Activated CD4-positive, alpha-beta T cell treated with anti-CD3 and anti-CD28 coated beads for 36 hours (primary cell): ENCODE measurements at regions of chr5 and their contacts with region 1.

Region 1: DNA sequence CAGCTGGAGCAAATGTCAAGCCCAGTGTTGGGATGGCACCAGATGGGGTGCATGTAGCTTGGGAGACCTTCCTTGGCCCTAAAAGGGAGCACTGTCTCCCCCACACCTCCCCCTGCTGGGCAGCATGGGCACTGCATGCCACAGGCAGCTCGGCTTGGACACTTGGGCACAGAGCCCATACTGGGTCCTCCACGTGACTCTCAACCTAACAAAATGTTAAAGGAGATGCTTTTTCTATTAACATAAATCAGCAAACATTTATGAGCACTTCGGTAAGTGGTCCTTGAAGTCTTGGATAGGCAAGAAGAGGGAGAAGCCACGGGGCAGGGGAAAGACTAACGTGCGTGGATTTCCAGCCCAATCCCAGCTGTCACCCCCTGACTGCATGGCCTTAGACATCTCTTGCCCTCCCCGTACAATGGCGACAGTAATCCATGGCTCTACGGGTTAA is 23.9 kb upstream of the MAPK9 start:
- DNase-seq: peak; percentile 84
- ATAC-seq: peak; percentile 66
- H3K4me3 Mint-ChIP-seq: no peak overlapping the region
- H3K27ac Mint-ChIP-seq: no peak overlapping the region
- H3K4me1 Mint-ChIP-seq: no peaks in the 10 kb centered on the region
- H3K27me3 Mint-ChIP-seq: peaks cover 4% of the 10 kb centered on the region

Region 2: GRCh38 chr5:180098961-180099732 is 216.6 kb before region 1 on chr5:
- CTCF ChIA-PET with region 1: no interaction called
- POLR2A ChIA-PET with region 1: no interaction called
- intact Hi-C with region 1: no loop called
- DNase-seq: no peak
- ATAC-seq: no peak
- H3K4me3 Mint-ChIP-seq: no peak overlapping the region
- H3K27ac Mint-ChIP-seq: no peak overlapping the region
- H3K4me1 Mint-ChIP-seq: no peaks in the 10 kb centered on the region
- H3K27me3 Mint-ChIP-seq: no peaks in the 10 kb centered on the region

Region 3: DNA sequence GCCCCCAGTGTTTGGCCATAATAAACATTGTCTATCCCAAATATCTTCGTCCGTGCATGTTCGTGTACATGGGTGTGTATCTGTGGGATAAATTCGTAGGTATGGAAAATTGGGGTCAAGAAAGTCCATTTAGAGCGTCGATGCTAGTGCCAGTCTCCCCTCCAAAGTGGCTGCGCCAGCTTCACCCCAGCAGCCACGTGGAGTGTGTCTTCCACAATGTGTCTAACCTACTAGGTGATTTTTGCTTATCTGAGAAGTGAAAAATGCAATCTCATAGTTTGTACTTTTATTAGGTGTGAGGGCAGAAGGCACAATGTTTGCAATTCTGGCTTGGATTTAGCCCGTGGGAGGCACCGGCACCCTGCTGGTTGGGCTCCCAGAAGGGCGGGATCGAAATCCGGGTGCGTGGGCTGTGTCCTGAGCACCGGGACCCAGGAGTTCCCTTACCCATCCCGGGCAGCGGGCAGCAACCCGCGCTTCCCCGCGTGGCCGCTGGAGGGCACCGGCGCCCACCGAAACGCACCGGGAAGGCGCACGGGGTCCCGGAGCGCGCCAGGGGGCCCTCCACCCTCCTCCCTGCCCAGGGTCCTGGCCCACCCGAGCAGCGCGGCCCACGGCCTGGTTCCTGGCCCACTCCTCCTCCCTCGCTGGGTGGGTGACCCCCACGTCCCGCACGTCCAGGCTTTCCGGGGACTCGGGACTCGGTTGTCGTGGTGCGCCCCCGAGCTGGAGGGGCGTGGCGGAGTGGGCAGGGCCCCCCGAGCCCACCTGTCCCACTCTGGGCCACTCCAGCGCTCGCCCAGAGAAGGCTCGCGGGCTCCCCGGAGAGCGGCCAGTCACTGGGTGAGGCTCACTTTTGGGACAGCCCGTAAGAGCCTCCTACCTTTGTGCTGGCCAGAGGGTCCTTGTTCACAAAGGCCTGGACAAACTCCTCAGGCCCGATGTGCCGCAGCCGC is 188.8 kb before region 1 on chr5:
- CTCF ChIA-PET with region 1: no interaction called
- POLR2A ChIA-PET with region 1: no interaction called
- intact Hi-C with region 1: loop called in 1 of 2 experiments (anchors 1 kb)
- DNase-seq: peak; percentile 66
- ATAC-seq: peak; percentile 85
- H3K4me3 Mint-ChIP-seq: no peak overlapping the region
- H3K27ac Mint-ChIP-seq: no peak overlapping the region
- H3K4me1 Mint-ChIP-seq: no peaks in the 10 kb centered on the region
- H3K27me3 Mint-ChIP-seq: peaks cover 14% of the 10 kb centered on the region

Region 4: DNA sequence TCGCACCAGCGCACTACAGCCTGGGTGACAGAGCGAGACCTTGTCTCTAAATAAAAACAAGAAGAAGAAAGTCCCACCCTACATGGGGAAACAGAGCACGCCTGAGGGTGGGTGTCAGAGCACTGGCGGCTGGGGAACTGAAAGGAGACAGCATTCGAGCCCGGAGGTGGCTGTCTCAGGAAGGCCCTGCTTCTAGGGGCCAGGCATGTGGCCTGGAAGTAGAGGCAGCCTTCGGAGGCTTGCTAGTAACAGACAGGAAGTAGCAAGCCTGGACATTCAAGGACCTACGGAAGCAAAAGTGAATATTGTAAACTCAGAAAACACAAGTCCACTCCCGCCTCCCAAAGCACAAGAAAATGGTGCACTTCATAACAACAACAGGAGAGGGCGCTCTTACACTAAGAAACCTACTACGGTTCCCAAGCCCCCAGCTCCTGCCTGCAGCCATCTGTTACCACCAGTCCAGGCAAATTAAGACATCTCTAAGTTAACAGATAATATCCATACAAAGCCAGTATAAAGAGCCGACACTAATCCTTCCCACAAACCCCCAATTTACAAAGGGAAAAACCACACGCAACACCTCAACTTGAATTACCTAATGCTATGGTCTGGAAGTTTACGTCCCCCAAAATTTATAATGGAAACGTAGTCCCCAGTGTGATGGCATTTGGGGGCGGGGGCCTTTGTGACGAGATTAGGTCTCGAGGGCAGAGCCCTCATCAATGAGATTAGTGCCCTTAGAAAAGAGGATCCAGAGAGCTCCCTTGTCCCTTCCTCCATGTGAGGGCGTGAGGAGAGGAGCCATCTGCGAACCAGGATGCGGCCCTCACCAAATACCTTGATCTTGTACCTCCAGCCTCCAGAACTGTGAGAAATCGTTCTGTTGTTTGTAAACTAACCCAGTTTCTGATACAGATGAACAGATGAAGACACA is 114.5 kb before region 1 on chr5:
- CTCF ChIA-PET with region 1: interaction called, 10 read pairs
- POLR2A ChIA-PET with region 1: no interaction called
- intact Hi-C with region 1: loop called in 1 of 2 experiments (anchors 1 kb)
- DNase-seq: peak; percentile 38
- ATAC-seq: no peak
- H3K4me3 Mint-ChIP-seq: no peak overlapping the region
- H3K27ac Mint-ChIP-seq: no peak overlapping the region
- H3K4me1 Mint-ChIP-seq: no peaks in the 10 kb centered on the region
- H3K27me3 Mint-ChIP-seq: peaks cover 21% of the 10 kb centered on the region

Region 5: DNA sequence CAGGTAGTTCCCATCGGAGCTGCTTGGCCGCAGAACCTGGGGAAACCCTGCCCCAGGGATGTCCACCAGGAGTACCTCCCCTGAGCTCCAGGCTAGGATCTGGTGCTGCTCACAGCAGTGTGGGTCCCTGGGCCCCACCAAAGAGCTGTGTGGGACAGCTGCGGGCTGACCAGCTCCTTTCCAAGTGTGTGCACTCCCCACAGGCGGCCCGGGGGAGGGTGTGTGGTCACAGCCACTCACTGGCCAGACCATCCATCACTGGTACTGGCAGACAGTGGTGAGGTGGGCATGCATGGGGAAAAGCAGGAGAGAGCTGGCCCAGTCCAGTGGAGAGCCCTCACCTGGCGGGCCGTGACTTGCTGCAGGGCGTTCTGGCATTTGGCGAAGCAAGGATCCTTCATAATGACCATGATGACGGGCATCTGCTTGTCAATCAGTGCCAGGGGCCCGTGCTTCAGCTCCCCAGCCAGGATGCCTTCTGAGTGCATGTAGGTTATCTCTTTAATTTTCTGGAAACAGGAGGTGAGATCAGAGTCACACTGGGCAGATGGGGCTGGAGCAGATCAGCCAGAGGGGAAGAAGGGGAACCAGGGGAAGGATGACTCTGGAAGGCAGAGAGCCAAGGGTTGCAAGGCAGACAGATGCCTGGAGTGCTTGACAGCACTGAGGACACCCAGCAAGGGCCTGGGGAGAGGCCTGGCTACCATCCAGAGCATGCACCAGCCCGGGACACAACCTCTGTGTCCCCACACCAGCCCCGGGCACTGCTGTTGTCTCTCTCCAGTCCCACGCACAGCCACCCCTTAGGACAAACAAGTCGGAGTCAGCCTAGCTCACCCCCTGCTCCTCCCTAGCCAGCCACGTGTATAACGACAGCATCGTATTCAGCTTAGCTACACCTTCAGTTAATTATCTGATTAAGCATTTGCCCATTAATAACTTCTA is 11.1 kb before region 1 on chr5:
- CTCF ChIA-PET with region 1: interaction called, 18 read pairs
- POLR2A ChIA-PET with region 1: interaction called, 7 read pairs
- intact Hi-C with region 1: no loop called
- DNase-seq: no peak
- ATAC-seq: no peak
- H3K4me3 Mint-ChIP-seq: no peak overlapping the region
- H3K27ac Mint-ChIP-seq: no peak overlapping the region
- H3K4me1 Mint-ChIP-seq: no peaks in the 10 kb centered on the region
- H3K27me3 Mint-ChIP-seq: no peaks in the 10 kb centered on the region

Region 6: DNA sequence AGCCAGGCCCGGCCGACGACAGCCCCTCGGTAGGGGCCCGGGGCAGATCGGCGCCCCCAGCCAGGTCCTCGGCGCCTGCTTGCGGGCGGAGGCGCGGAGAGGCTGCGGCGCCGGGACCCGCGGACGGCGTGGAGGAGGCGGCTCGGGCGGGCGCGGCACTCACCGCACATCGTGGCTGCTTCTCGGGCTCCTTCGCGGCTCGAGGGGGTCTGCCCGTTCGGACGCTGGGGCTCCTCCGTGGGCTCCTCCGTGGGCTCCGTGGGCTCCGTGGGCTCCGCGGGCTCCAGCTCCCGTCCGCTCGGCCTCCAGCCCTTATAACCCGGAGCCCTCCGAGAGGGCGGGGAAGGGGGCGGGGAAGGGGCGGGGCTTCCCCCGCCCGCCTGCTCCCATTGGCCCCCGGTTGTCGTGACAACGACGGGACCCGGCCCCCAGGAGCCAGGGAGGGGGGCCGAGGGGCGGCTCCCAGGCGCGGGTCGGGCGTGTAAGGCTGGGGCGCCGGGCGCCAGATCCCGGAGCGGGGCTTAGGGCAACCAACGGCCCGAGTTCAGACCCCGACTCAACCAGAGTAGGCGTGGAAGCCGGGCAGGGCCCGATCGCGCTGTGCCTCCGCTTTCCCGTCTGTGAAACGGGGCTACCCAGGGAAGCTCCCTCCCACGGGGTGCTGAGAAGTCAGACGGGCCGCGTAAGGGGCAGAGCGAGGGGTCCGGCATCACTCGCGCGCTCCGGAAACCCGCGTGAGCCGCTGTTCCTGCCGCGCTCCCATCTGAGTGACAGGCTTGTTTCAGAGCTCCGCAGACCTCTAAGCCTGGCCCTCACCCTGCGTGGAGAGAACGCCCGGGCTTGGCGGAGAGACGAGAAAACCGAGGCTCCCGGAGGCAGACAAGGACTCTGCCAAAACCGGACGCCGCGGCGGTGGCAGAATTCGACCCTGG is 37.5 kb after region 1 on chr5 and contains the start of gene GFPT2:
- CTCF ChIA-PET with region 1: no interaction called
- POLR2A ChIA-PET with region 1: no interaction called
- intact Hi-C with region 1: loop called in 1 of 2 experiments (anchors 1 kb)
- DNase-seq: peak; percentile 84
- ATAC-seq: peak; percentile 92
- H3K4me3 Mint-ChIP-seq: peak within 1 kb of the TSS; percentile 55
- H3K27ac Mint-ChIP-seq: no peak within 1 kb of the TSS
- H3K4me1 Mint-ChIP-seq: peaks cover 5% of the 10 kb centered on the region
- H3K27me3 Mint-ChIP-seq: peaks cover 35% of the 10 kb centered on the region
- total RNA-seq, gene GFPT2: 0.16 TPM